Left lung (tissue), 14 donors: ENCODE measurements at regions of chr9 and their contacts with region 1.

Region 1: GRCh38 chr9:131056781-131057506 is 39.4 kb upstream of the AIF1L start:
- DNase-seq: no peak
- ATAC-seq: no peak
- H3K4me3 ChIP-seq: no peak overlapping the region
- H3K27ac ChIP-seq: no peak overlapping the region
- H3K4me1 ChIP-seq: no peaks in the 10 kb centered on the region
- H3K27me3 ChIP-seq: peaks cover 0 to 20% of the 10 kb centered on the region in 2 donors
- CTCF ChIP-seq: no peak

Region 2: GRCh38 chr9:131334629-131335367 is 277.9 kb after region 1 on chr9:
- intact Hi-C with region 1: loop called in 1 of 2 experiments (anchors 5 kb)
- DNase-seq: peak in 1 of 4 donors; percentile 41
- ATAC-seq: peak; percentile 16
- H3K4me3 ChIP-seq: no peak overlapping the region
- H3K27ac ChIP-seq: no peak overlapping the region
- H3K4me1 ChIP-seq: no peaks in the 10 kb centered on the region
- H3K27me3 ChIP-seq: no peaks in the 10 kb centered on the region
- CTCF ChIP-seq: no peak